ENCODE measurements at regions of chr1 and their contacts with region 1.

Region 1: DNA sequence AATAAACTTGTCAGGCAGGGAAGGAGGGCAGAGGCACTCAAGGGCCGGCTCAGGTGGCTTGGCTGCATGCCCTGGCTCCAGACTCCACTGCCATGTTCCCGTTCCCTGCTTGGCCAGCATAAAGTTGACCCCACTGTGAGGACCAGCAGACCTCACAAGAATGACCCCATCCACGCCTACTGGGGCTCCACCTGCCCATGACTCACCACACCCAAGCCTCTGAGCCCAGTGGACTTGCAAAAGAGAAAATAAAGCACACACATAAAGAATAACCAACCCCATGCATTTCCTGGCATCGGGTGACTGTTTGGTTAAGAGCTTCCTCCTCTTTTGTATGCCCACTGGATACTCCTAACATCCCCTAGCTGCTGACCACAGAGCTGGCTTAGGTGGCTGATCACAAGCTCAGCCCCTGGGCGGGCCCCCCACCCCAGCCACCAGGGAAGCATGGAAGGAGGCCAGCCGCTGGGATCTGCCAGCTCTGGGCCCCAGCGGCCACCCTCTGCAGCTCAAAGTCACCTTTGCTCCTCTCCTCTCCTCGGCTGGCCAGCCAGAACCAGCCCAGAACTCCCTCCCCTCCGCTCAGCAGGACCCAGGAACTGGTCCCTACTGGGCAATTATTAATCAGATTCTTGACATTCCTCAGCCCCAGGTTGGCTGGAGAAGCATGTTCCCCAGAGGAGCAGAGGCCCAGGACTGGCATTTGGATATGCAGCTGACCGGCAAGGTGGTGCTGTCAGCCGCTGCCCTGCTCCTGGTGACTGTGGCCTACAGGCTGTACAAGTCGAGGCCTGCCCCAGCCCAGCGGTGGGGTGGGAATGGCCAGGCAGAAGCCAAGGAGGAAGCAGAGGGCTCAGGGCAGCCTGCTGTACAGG is at the start of gene KLHDC7A:
- DNase-seq: peak; percentile 20
- H3K4me3 ChIP-seq: no peak within 1 kb of the TSS
- H3K27ac ChIP-seq: no peak within 1 kb of the TSS
- H3K4me1 ChIP-seq: peaks cover 6% of the 10 kb centered on the region
- H3K27me3 ChIP-seq: no peaks in the 10 kb centered on the region
- CTCF ChIP-seq: no peak
- total RNA-seq, gene KLHDC7A: 1.0 TPM in 1 of 2 donors, not detected in the other

Region 2: DNA sequence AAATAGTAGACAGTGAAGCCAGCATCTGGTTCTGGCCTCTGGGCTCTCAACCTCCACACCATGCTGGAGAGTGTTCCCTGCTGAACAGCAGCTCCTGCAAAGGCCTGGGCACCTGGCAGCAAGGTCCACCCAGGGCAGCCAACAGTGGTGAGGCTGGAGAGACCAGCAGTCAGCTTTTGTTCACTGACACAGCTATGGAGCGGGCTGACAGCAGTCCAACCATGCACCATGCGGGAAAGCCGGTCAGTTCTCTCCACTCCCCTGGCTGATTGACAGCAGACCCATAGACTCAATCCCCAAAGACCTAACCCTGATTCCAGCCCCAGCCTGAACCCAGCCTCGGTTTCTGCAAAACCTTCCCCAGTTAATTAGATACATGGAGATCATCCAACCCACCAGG is 49.2 kb after region 1 on chr1:
- CTCF ChIA-PET with region 1: no interaction called
- dilution Hi-C with region 1: loop called (anchors 5 kb)
- in situ Hi-C with region 1: no loop called
- intact Hi-C with region 1: no loop called
- DNase-seq: no peak
- H3K4me3 ChIP-seq: no peak overlapping the region
- H3K27ac ChIP-seq: no peak overlapping the region
- H3K4me1 ChIP-seq: no peaks in the 10 kb centered on the region
- H3K27me3 ChIP-seq: no peaks in the 10 kb centered on the region
- CTCF ChIP-seq: no peak

Measured in mammary epithelial cell (primary cell).